ENCODE measurements at regions of chr3 and their contacts with region 1.

Region 1: DNA sequence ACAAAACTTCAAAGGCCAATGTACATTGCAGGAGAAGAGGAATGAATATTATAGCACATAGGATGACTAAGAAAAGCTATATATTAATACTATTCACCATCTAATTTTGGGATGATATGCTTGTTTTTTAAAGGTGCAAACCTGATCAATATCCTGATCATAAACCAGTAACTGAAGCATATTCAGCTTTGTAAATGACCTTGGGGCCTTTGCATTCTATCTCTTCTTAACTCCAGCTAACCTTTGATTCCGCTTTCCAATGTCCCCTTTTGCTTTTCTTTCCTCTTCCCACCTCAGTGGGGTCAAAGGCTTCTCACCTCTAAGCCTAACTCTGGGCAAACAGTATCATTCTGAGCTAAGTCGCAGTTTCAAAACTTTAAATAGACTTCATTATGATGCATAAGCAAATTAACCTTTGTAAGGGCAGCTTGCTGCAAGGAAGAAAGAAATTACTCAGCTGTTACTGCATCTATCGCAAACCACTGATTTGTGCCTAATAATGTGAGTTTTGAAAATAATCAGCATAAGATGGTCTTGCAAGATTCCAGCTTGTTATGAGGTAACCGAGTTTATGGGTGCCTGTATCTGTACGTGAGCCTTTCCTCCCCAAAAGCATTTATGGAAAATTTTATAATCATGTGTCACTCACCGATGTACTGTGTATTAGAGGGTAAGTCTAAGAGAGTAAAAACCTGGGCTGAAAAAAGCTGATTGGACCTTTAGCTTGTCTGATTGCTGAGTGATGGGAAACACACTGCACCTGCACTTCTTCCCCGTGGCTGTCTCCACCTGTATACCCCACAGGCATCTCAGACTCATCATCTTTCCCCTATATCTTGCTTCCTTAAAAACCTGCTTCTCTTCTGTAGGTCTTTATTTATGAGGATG is 116.8 kb downstream of the TPRG1 start:
- DNase-seq: no peak
- ATAC-seq: no peak
- H3K4me3 ChIP-seq: no peak overlapping the region
- H3K4me3 Mint-ChIP-seq: no peak overlapping the region
- H3K27ac ChIP-seq: no peak overlapping the region
- H3K27ac Mint-ChIP-seq: no peak overlapping the region
- H3K4me1 ChIP-seq: peaks cover 14% of the 10 kb centered on the region
- H3K4me1 Mint-ChIP-seq: peaks cover 36% of the 10 kb centered on the region
- H3K27me3 ChIP-seq: no peaks in the 10 kb centered on the region
- H3K27me3 Mint-ChIP-seq: no peaks in the 10 kb centered on the region
- CTCF ChIP-seq: no peak

Region 2: GRCh38 chr3:189349772-189350171 is 61.2 kb after region 1 on chr3:
- CTCF ChIA-PET with region 1: no interaction called
- POLR2A ChIA-PET with region 1: no interaction called
- intact Hi-C with region 1: loop called in 1 of 2 experiments (anchors 5 kb)
- DNase-seq: no peak
- ATAC-seq: no peak
- H3K4me3 ChIP-seq: no peak overlapping the region
- H3K4me3 Mint-ChIP-seq: no peak overlapping the region
- H3K27ac ChIP-seq: no peak overlapping the region
- H3K27ac Mint-ChIP-seq: no peak overlapping the region
- H3K4me1 ChIP-seq: peaks cover 2% of the 10 kb centered on the region
- H3K4me1 Mint-ChIP-seq: peaks cover 5% of the 10 kb centered on the region
- H3K27me3 ChIP-seq: no peaks in the 10 kb centered on the region
- H3K27me3 Mint-ChIP-seq: no peaks in the 10 kb centered on the region
- CTCF ChIP-seq: no peak

Region 3: DNA sequence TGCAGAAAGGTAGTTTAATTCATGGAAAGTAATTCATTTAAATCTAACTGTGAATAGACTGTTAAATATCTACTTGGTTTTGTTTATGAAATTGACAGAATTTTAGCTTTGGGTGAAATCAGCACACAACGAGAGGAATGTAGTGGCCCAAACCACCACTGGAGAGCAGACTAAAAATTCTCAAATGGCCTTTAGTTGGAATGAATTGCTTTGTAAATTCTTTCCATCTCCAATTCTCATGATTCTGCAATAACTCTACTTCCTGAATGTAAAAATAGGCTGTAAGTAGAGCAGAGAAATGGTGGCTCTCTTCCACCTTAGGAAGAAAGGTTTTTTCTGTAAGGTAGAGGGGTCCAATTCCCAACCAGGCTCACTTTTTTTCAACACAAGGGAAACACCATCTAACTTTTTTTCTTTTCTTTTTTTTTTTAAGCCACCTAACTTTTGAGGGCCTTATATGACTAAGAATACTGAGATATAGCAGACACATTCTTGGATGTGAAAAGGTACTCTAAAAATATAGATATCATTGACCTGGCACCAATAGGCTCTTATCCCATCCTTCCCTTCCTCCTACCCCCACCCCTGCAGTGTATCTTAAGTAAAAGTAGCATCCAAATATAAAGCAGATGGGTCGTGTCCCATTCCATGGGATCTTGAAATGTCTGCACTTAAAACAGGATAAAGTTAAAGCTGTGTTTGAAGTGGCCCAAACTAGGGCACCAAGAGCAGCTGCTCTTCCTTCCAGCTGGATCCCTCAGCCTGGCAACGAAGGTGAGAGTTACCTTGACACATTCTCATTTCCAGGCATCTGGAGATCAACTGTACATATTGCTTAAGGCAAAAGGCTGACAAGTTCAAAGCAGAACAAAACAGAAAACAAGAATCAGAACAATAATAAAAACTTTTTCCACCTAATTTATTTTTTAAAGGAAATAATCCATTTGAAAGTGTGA is 77.3 kb after region 1 on chr3:
- CTCF ChIA-PET with region 1: no interaction called
- POLR2A ChIA-PET with region 1: no interaction called
- intact Hi-C with region 1: loop called in 1 of 2 experiments (anchors 5 kb)
- DNase-seq: no peak
- ATAC-seq: no peak
- H3K4me3 ChIP-seq: no peak overlapping the region
- H3K4me3 Mint-ChIP-seq: no peak overlapping the region
- H3K27ac ChIP-seq: no peak overlapping the region
- H3K27ac Mint-ChIP-seq: no peak overlapping the region
- H3K4me1 ChIP-seq: no peaks in the 10 kb centered on the region
- H3K4me1 Mint-ChIP-seq: peaks cover 7% of the 10 kb centered on the region
- H3K27me3 ChIP-seq: no peaks in the 10 kb centered on the region
- H3K27me3 Mint-ChIP-seq: no peaks in the 10 kb centered on the region
- CTCF ChIP-seq: no peak

Measured in CD8-positive, alpha-beta T cell (primary cell).